Panc1 (cell line): ENCODE measurements at regions of chrX and their contacts with region 1.

Region 1: DNA sequence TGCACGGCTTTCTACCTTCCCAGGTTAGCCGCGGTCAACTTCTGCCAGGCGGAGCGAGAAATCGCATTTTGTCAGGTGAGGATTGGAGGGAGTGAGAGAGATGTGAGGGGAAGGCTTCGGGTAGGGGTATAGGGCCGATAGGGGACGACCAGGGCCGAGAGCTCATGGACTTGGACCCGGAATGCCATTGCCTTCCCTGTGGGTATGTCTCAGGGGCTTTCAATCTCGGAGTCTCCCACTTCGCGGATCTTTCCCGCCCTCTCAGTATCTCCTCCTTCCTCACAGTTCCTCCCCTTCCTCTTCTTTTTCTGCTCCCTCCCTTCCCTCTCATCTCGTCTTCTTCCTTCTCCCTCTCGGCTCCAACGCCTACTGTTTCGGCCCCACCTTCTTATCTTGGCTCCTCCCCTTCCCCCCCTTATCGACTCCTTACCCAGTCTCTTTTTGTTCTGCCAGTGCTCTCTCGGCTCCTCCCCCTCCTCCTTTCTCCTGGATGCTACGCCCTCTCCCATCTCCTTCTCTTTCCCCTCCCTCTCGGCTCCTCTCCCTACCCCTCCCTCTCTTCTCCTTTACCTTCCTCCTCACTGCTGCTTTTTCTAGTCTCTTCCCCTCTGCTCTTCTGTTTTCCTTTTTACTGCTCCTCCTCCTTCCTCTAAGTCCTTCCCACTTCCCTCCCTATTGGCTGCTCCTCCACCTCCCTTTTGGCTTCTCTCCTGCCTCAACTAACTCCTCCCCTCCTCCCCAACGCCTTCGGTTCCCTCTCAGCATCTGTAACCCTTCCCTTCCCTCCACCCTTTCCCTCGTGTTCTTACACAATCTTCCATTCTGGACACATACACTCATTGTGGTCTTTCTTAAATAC is 29.4 kb upstream of the RBMX start:
- DNase-seq: peak; percentile 72
- ATAC-seq: peak; percentile 87
- H3K4me3 ChIP-seq: peak overlapping the region; percentile 89 to 98
- H3K27ac ChIP-seq: peak overlapping the region; percentile 91
- H3K4me1 ChIP-seq: peaks cover 5% of the 10 kb centered on the region
- H3K27me3 ChIP-seq: no peaks in the 10 kb centered on the region
- CTCF ChIP-seq: no peak

Region 2: DNA sequence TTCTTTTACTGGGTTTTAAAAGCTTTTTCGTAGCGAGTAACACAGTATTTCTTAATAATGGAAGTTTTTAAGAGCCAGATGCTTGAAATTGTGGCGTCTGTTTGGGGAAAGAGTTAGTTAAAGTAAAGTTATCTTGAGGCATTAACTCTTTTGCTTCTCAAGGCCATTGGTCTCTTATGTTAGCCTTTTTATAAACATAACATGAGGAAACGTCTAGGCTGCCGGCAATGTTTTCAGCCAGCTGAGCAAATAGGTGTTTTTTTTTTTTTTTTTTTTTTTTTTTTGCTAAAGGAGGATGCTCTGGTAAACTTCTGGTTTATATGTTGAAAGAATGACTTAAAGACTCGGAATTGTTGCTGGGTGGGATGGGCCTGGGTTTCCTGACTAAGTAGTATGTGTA is 21.7 kb after region 1 on chrX:
- CTCF ChIA-PET with region 1: interaction called, 16 read pairs
- POLR2A ChIA-PET with region 1: no interaction called
- in situ Hi-C with region 1: no loop called
- intact Hi-C with region 1: no loop called
- DNase-seq: no peak
- ATAC-seq: no peak
- H3K4me3 ChIP-seq: no peak overlapping the region
- H3K27ac ChIP-seq: no peak overlapping the region
- H3K4me1 ChIP-seq: no peaks in the 10 kb centered on the region
- H3K27me3 ChIP-seq: no peaks in the 10 kb centered on the region
- CTCF ChIP-seq: no peak